Calu3 (cell line): ENCODE measurements at regions of chr6 and their contacts with region 1.

Region 1: DNA sequence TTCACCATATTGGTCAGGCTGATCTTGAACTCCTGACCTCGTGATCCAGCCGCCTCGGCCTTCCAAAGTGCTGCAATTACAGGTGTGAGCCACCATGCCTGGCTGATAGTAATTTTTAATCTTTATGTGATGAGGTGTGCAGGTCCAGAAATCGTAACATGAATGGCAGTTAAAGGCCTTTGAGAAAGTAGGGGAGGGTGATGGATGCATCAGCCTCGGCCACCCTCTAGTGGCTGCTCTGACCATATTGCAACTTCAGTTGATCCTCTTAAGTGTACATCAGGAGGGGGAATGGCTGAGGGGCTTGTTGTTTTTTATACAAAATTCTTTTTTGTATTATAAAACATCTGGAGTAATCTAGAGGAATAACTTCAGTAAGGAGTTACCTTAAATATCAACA is 193.0 kb downstream of the ZFAND3 start:
- DNase-seq: peak; percentile 54
- H3K4me3 Mint-ChIP-seq: no peak overlapping the region
- H3K27ac Mint-ChIP-seq: no peak overlapping the region
- H3K4me1 Mint-ChIP-seq: no peaks in the 10 kb centered on the region
- H3K27me3 Mint-ChIP-seq: no peaks in the 10 kb centered on the region
- CTCF ChIP-seq: peak; percentile 85

Region 2: GRCh38 chr6:37860226-37860839 is 152.2 kb before region 1 on chr6:
- CTCF ChIA-PET with region 1: no interaction called
- intact Hi-C with region 1: loop called (anchors 5 kb)
- DNase-seq: peak; percentile 56
- H3K4me3 Mint-ChIP-seq: no peak overlapping the region
- H3K27ac Mint-ChIP-seq: no peak overlapping the region
- H3K4me1 Mint-ChIP-seq: peaks cover 48% of the 10 kb centered on the region
- H3K27me3 Mint-ChIP-seq: no peaks in the 10 kb centered on the region
- CTCF ChIP-seq: peak; percentile 72

Region 3: DNA sequence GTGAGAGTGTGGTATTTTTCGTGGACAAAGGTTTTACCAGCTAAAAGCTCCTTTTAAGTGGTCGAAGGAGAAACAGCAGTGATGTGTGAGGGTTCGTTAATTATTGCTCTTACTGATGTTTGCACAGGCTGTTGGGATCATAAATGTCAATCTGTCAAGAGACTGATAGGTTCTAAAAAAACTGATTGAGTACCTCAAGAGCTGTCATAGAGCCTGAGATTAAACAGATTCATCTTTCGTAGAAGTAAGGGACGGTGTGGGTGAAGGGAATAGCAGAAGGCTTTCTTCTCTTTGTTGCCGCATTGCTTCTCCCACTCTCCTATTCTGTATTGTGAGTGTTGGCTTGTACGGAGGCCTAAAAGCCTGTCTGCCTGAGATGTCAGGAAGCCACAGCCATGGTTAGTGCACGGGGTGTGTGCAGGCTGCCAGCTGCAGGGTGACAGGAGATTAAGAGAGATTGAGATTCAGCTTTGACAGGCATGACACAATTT is 98.0 kb after region 1 on chr6:
- CTCF ChIA-PET with region 1: no interaction called
- intact Hi-C with region 1: no loop called
- DNase-seq: no peak
- H3K4me3 Mint-ChIP-seq: no peak overlapping the region
- H3K27ac Mint-ChIP-seq: no peak overlapping the region
- H3K4me1 Mint-ChIP-seq: peaks cover 9% of the 10 kb centered on the region
- H3K27me3 Mint-ChIP-seq: no peaks in the 10 kb centered on the region
- CTCF ChIP-seq: no peak